ENCODE measurements at regions of chrX and their contacts with region 1.

Region 1: GRCh38 chrX:132631579-132632232 is 142.9 kb upstream of the MBNL3 start:
- DNase-seq: no peak
- H3K4me3 ChIP-seq: no peak overlapping the region
- H3K27ac ChIP-seq: no peak overlapping the region
- H3K27me3 ChIP-seq: peaks cover 0 to 89% (median 39%) of the 10 kb centered on the region in 45 donors
- CTCF ChIP-seq: peak in 53 of 56 donors; percentile 18 to 76 (median 53)

Region 2: GRCh38 chrX:131841496-131842410 is 790.0 kb before region 1 on chrX:
- intact Hi-C with region 1: loop called in 1 of 2 experiments (anchors 10 kb)
- DNase-seq: peak in 1 of 10 donors; percentile 48
- H3K4me3 ChIP-seq: peak overlapping the region in 1 of 59 donors; percentile 6
- H3K27ac ChIP-seq: no peak overlapping the region
- H3K27me3 ChIP-seq: peaks cover 0 to 71% (median 26%) of the 10 kb centered on the region in 45 donors
- CTCF ChIP-seq: peak in 55 of 56 donors; percentile 51 to 92 (median 83)

Region 3: DNA sequence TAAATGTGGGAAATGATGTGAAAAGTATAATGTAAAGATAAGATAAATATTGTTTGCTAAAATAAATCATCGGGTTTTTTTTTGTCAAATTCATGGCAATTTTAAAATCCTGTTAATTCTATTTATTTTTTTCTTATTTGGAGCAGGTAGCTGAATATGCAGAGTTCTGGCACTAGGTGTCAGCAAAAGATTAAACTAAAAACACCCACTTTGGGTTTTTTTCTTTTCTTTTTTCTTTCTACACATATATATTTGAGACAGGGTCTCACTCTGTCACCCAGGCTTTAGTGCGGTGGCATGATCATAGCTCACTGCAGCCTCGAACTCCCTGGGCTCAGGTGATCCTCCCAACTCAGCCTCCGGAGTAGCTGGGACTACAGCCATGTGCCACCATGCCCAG is 405.5 kb before region 1 on chrX:
- intact Hi-C with region 1: loop called in 1 of 2 experiments (anchors 5 kb)
- DNase-seq: no peak
- H3K4me3 ChIP-seq: no peak overlapping the region
- H3K27ac ChIP-seq: no peak overlapping the region
- H3K27me3 ChIP-seq: peaks cover 0 to 74% (median 13%) of the 10 kb centered on the region in 45 donors
- CTCF ChIP-seq: peak in 53 of 56 donors; percentile 9 to 65 (median 40)

Region 4: GRCh38 chrX:132518401-132518800 is 113.3 kb before region 1 on chrX:
- intact Hi-C with region 1: no loop called
- DNase-seq: no peak
- H3K4me3 ChIP-seq: no peak overlapping the region
- H3K27ac ChIP-seq: no peak overlapping the region
- H3K27me3 ChIP-seq: peaks cover 0 to 69% (median 4%) of the 10 kb centered on the region in 45 donors
- CTCF ChIP-seq: no peak

Region 5: GRCh38 chrX:132877954-132878536 is 246.3 kb after region 1 on chrX:
- intact Hi-C with region 1: no loop called
- DNase-seq: no peak
- H3K4me3 ChIP-seq: no peak overlapping the region
- H3K27ac ChIP-seq: no peak overlapping the region
- H3K27me3 ChIP-seq: peaks cover 0 to 48% (median 7%) of the 10 kb centered on the region in 45 donors
- CTCF ChIP-seq: no peak

Region 6: DNA sequence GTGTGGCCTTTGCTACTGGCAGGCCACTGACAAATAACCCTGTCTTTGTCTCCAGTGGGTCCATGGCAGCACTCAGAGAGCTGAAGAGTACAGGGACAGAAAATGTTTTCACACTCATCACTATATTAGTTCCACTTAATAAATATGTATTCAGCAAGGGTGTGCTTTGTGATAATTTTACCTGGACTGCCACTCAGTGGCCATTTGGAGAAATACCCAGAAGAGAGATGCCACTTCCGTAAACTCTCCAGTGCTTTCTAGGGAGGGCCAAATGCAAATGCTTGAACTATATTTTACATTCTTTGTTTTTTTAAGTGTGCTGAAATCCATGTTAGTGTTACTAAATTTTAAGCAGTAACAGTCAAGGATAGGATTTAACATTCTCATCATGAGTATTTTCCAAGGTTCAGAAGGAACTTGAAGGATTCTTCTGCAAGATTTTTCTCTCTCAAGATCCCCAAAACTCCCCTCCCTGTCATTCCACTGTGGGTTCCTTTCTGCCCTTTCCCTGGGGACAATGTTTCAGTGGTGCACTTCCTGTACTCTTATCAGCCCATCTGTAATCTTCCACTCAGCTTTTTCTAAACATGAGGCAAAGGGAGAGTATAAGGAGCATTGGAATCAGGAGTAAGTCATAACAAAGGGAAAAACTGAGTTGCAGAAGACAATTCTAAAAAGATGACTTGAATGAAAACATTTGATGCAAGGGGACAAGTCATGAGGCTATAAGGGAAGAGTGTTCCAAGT is 540.4 kb after region 1 on chrX:
- intact Hi-C with region 1: loop called in 1 of 2 experiments (anchors 5 kb)
- DNase-seq: no peak
- H3K4me3 ChIP-seq: no peak overlapping the region
- H3K27ac ChIP-seq: no peak overlapping the region
- H3K27me3 ChIP-seq: peaks cover 0 to 61% (median 16%) of the 10 kb centered on the region in 45 donors
- CTCF ChIP-seq: peak in 48 of 56 donors; percentile 12 to 61 (median 34)

Measured in dorsolateral prefrontal cortex (tissue), 120 donors.